Activated naive CD8-positive, alpha-beta T cell treated with anti-CD3 and anti-CD28 coated beads, Interleukin-2, amount 10 ng/mL, durations not matched to agents 7 days and 5 days (primary cell): ENCODE measurements at regions of chr1 and their contacts with region 1.

Region 1: DNA sequence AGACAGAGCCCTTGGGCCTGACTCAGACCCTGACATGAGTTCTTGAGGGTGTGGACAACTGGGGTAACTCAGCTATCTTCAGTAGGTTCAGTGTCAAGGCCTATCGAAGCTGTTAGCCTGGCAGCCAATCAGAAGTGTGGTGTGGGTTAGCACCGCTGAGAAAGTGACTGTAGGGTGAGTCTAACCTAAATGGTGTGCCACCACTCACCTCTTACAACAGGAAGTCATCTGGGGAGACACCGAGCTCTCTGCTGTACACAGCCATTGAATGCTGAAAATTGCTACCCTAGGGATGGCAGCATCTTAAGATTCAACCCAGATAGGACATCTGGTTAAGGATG is 44.6 kb downstream of the RASSF5 start:
- DNase-seq: peak; percentile 67
- ATAC-seq: peak; percentile 89
- H3K4me3 Mint-ChIP-seq: peak overlapping the region; percentile 90
- H3K27ac Mint-ChIP-seq: peak overlapping the region; percentile 98
- H3K4me1 Mint-ChIP-seq: peaks cover 54% of the 10 kb centered on the region
- H3K27me3 Mint-ChIP-seq: no peaks in the 10 kb centered on the region

Region 2: DNA sequence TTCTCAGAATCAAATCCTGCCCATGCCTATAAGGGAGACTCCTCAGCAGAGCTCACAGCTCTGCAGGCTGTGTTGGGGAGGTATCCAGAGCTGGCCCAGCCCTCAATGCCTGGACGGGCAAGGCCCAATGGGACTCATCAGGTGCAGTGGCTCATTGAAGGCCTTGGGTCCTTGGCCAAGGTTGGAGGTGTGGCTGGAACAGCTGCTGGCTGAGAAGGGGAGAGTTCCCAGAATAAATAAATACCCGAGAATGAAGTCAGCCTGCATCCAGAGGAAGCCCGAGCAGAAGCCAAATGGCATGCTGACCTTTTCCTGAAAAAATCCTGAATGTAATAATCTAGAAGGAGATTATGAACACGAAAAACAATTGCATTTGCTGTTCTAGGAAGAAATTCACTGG is 106.8 kb before region 1 on chr1:
- POLR2A ChIA-PET with region 1: no interaction called
- DNase-seq: no peak
- ATAC-seq: no peak
- H3K4me3 Mint-ChIP-seq: no peak overlapping the region
- H3K27ac Mint-ChIP-seq: no peak overlapping the region
- H3K4me1 Mint-ChIP-seq: peaks cover 5% of the 10 kb centered on the region
- H3K27me3 Mint-ChIP-seq: no peaks in the 10 kb centered on the region

Region 3: DNA sequence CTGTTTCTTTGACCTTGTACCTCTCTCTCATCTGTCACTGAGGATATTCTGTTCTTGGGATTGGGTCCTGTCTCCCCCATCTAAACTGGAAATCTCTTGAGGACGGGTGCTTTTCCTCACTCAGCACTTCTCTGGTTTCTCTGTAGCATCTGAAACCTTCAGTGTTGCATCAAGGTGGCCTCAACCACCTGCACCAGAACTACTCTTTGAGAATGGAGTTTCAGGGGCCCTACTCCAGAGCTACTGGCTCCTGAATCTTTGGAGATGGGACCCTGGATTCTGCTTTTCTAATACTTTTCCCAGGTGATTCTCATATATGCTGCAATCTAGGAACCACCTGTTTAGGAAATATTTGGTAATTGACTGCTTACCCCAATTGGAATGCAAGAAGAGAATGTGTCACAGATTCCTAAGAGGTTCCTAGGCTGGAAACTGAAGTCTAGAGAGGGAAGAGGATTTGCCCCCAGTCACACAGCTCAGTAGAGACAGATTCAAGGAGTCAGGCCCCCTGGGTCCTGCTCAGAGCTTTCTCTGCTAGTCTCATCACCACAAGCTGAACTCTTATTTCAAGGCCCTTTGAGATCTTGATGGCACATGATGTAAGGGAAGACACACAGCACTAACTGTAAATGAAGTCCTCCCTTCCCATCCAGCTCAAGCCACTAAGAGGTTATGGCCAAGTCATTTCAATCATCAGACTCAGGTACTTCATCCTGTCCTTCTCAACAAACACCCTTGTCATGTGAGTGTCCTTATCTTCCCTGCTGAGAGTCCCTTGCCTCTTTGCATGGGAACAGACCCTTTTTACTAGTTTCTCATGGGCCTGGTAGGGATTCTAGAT is 11.6 kb after region 1 on chr1:
- POLR2A ChIA-PET with region 1: interaction called, 584 read pairs
- DNase-seq: no peak
- ATAC-seq: peak; percentile 12
- H3K4me3 Mint-ChIP-seq: peak overlapping the region; percentile 79
- H3K27ac Mint-ChIP-seq: peak overlapping the region; percentile 83
- H3K4me1 Mint-ChIP-seq: peaks cover 90% of the 10 kb centered on the region
- H3K27me3 Mint-ChIP-seq: no peaks in the 10 kb centered on the region